MCF 10A (cell line): ENCODE measurements at regions of chr10 and their contacts with region 1.

Region 1: DNA sequence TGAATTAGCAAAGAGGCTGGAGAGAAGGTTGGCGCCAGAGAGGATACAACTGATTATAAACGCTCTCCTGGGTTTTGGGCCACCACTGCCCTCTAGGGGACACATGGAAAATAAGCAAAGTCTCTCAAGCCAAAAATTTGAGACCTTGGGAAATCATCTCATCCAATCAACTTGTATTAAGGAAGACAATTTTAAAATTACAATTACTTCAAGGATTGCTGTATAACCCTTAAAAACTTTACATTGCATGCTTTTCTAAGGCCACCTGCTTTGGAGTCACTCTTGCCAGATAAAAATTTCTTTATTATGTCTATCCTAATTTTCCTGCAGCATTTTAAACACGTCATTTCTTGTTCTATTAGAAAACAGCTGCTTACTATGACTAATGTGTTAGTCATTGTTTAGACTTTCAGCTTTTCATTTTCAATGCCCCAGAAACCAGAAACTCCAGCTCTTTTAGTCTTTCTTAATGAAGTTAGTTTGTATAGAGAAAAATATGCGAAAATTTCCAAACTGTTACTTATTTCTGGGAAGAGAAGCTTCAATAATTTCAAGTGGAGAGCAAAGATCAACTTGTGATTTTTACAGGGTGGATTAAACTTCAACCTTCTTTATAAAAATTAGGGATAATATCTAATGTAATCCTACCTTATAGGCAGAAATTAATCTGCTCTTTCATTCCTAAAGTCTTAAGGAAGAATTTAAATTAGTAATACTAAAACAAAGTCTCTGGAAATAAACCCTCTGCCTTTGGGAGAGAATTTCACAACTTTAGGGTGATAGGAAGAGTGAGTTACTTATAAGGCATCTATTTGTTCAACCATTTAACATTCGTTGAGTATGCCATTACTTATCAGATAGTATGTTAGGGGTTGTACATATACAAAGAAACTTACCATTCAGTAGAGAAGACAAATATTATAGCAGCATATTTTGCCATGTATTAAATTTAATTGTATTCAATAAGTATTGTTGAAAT is 20.6 kb upstream of the RHOBTB1 start:
- DNase-seq: peak; percentile 90
- H3K4me3 Mint-ChIP-seq: peak overlapping the region; percentile 37
- H3K27ac Mint-ChIP-seq: peak overlapping the region; percentile 97
- H3K4me1 Mint-ChIP-seq: peaks cover 19% of the 10 kb centered on the region
- H3K27me3 Mint-ChIP-seq: no peaks in the 10 kb centered on the region
- CTCF ChIP-seq: peak; percentile 75

Region 2: DNA sequence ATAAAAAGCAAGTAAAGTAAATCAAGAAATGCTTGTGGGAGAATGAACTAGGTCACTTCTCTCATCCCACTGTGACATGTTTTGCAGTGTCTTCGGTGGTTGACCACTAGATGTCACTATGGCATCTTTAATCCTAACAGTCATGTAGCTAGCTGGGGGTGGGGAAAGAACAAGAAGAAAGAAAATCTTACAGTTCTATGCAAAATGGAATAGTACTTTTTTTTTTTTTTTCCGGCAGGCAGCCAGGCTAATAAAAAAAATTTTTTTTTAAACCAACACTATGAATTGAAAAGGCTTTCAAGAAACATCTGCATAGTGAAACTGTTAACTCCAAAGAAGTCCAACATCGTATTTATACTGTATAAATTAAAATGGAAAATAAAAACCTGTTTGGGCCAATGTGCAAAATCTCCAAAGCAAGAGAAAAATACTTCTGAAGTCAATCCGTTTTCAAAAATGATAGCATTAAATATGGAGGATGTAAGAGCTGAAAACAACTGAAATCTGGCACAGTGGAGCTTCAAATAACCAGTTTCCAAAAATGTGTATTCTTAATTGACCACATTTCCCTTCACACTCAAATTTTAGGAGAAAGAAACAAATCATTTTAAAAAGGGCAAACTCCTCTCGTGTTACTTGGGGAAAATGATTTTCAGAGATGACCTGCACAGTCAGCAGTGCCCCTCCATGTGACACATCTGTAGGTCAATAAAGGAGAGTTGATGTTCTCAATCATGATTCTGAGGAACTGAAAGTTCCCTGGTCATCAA is 147.7 kb before region 1 on chr10:
- CTCF ChIA-PET with region 1: interaction called, 9 read pairs
- POLR2A ChIA-PET with region 1: interaction called, 8 read pairs
- intact Hi-C with region 1: loop called (anchors 1 kb)
- DNase-seq: peak; percentile 81
- H3K4me3 Mint-ChIP-seq: no peak overlapping the region
- H3K27ac Mint-ChIP-seq: no peak overlapping the region
- H3K4me1 Mint-ChIP-seq: no peaks in the 10 kb centered on the region
- H3K27me3 Mint-ChIP-seq: no peaks in the 10 kb centered on the region
- CTCF ChIP-seq: peak; percentile 72

Region 3: GRCh38 chr10:60883187-60883586 is 81.4 kb before region 1 on chr10:
- CTCF ChIA-PET with region 1: no interaction called
- POLR2A ChIA-PET with region 1: no interaction called
- intact Hi-C with region 1: loop called (anchors 1 kb)
- DNase-seq: peak; percentile 44
- H3K4me3 Mint-ChIP-seq: no peak overlapping the region
- H3K27ac Mint-ChIP-seq: no peak overlapping the region
- H3K4me1 Mint-ChIP-seq: peaks cover 5% of the 10 kb centered on the region
- H3K27me3 Mint-ChIP-seq: no peaks in the 10 kb centered on the region
- CTCF ChIP-seq: peak; percentile 32

Region 4: DNA sequence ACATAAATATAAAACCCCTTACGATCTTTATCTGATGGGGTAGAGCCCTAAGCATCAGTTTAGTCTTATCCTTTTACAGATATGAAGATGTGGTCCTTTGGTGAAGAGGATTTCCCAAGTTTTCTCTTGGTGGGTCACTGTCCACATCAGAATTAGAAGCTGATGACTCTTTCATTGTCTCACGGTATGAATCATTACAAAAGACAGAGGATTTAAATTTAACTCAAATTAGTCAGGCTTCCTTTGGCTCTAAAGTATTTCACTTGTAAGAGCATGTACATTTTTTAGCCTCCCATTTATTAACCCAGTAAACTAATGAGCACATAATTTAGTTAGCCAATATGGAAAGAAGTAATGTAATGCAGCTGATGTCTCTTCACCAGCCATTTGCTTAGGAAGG is 538.5 kb after region 1 on chr10:
- CTCF ChIA-PET with region 1: interaction called, 10 read pairs
- POLR2A ChIA-PET with region 1: no interaction called
- intact Hi-C with region 1: no loop called
- DNase-seq: no peak
- H3K4me3 Mint-ChIP-seq: no peak overlapping the region
- H3K27ac Mint-ChIP-seq: no peak overlapping the region
- H3K4me1 Mint-ChIP-seq: peaks cover 9% of the 10 kb centered on the region
- H3K27me3 Mint-ChIP-seq: no peaks in the 10 kb centered on the region
- CTCF ChIP-seq: no peak